ENCODE measurements at regions of chr6 and their contacts with region 1.

Region 1: DNA sequence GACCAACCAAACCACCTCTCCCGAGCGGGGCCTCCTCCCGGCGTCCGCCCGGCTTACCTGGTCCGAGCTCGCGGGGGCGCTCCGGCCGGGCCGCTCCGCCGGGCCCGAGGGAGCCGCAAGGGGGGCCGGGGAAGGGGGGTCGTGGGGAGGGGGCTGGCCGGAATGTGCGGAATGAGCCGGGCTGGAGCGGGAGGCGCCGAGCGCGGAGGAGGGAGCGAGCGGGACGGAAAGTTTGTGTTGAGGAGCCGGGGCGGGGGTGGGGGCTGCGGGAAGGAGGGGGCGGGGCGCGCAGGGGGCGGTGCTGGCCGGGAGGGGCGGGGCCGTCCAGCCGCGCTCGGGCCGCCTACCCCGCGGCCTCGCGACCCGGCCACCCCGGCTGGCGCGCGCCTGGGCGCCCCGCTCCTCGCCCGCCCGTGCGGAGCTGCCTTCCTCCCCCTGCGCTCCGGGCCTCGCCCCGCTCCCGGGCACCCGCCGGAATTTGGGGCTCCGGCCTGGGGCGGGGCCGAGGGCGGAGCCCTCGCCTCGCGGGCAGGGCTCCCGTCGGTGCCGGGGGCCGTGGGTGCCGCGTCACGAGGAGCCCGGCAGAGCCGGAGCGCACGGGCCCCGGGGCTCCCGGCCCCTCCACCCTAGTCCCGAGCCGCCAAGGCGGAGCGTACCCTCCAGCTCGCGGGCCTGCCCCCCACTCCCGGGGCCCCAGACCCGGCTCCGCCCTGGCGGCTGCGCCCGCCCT is at the start of gene TEAD3:
- DNase-seq: peak; percentile 59 to 70
- ATAC-seq: peak; percentile 11 to 72 (median 44)
- H3K4me3 ChIP-seq: peak within 1 kb of the TSS; percentile 70 to 95 (median 83)
- H3K27ac ChIP-seq: peak within 1 kb of the TSS; percentile 72 to 98 (median 95)
- H3K4me1 ChIP-seq: peaks cover 17 to 71% (median 48%) of the 10 kb centered on the region in 9 donors
- H3K27me3 ChIP-seq: peaks cover 0 to 88% (median 5%) of the 10 kb centered on the region in 7 donors
- CTCF ChIP-seq: peak in 2 of 9 donors; percentile 20 to 22
- total RNA-seq, gene TEAD3: 27.9 to 54.4 (median 35.5) TPM

Region 2: DNA sequence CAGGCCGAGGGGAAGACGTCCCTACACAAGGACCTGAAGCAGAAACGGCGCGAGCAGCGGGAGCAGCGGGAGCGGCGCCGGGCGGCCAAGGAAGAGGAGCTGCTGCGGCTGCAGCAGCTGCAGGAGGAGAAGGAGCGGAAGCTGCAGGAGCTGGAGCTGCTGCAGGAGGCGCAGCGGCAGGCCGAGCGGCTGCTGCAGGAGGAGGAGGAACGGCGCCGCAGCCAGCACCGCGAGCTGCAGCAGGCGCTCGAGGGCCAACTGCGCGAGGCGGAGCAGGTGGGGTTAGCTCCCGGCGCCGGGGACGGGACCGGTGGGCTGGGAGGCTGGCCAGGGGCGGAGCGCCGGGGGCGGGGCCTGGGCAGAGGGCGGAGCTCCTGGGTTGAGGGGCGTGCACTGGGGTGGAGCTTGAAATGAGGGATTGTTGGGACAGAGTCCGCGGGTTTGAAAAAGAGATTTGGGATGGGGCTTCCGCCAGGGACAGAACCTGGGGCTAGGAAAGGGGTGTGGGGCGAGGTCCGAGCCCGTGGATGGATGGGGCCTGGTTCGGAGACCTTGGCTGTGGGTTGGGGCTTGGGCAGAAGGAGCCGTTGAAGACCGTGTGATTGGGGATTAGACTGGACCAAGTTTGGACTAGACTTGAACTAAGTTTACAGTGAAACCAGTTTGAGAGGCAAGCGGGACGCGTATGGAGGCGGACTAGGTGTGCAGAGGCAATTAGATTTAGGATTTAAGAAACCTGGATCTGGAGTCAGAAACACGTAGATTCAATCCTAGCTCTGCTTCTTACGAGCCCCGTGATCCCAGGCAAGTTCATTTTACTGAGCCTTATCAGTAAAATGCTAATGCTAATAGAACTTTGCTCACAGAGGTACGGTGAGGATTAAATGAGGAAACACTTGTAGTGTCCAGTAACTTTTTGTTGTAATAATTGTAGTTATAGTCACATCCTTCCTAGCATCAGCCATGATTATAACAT is 178.5 kb before region 1 on chr6:
- intact Hi-C with region 1: no loop called
- DNase-seq: peak; percentile 80 to 88
- ATAC-seq: peak; percentile 98 to 99 (median 99)
- H3K4me3 ChIP-seq: peak overlapping the region; percentile 40 to 82 (median 56)
- H3K27ac ChIP-seq: peak overlapping the region in 4 of 10 donors; percentile 30 to 58 (median 48)
- H3K4me1 ChIP-seq: peaks cover 0 to 16% (median 10%) of the 10 kb centered on the region in 9 donors
- H3K27me3 ChIP-seq: no peaks in the 10 kb centered on the region
- CTCF ChIP-seq: peak in 3 of 9 donors; percentile 20 to 35 (median 21)

Region 3: GRCh38 chr6:35468181-35468979 is 28.6 kb before region 1 on chr6 and contains the start of gene RPL10A:
- intact Hi-C with region 1: loop called in 1 of 10 experiments (anchors 2 kb)
- DNase-seq: peak; percentile 92 to 97
- ATAC-seq: peak; percentile 87 to 95 (median 93)
- H3K4me3 ChIP-seq: peak within 1 kb of the TSS; percentile 68 to 87 (median 82)
- H3K27ac ChIP-seq: peak within 1 kb of the TSS; percentile 44 to 93 (median 89)
- H3K4me1 ChIP-seq: peaks cover 4 to 46% (median 40%) of the 10 kb centered on the region in 9 donors
- H3K27me3 ChIP-seq: no peaks in the 10 kb centered on the region
- CTCF ChIP-seq: peak; percentile 94 to 99 (median 97)
- total RNA-seq, gene RPL10A: 476 to 650 (median 529) TPM

Region 4: GRCh38 chr6:35511562-35511941 is 14.5 kb after region 1 on chr6:
- intact Hi-C with region 1: no loop called
- DNase-seq: no peak
- ATAC-seq: peak in 2 of 8 donors; percentile 22 to 28
- H3K4me3 ChIP-seq: peak overlapping the region in 4 of 10 donors; percentile 22 to 32 (median 28)
- H3K27ac ChIP-seq: no peak overlapping the region
- H3K4me1 ChIP-seq: peaks cover 0 to 10% (median 4%) of the 10 kb centered on the region in 9 donors
- H3K27me3 ChIP-seq: peaks cover 0 to 63% (median 46%) of the 10 kb centered on the region in 7 donors
- CTCF ChIP-seq: no peak

Region 5: GRCh38 chr6:35562053-35562452 is 65.0 kb after region 1 on chr6:
- intact Hi-C with region 1: no loop called
- DNase-seq: peak in 1 of 2 donors; percentile 15
- ATAC-seq: peak in 2 of 8 donors; percentile 31 to 89
- H3K4me3 ChIP-seq: no peak overlapping the region
- H3K27ac ChIP-seq: no peak overlapping the region
- H3K4me1 ChIP-seq: peaks cover 0 to 5% (median 0%) of the 10 kb centered on the region in 9 donors
- H3K27me3 ChIP-seq: peaks cover 0 to 21% (median 14%) of the 10 kb centered on the region in 7 donors
- CTCF ChIP-seq: no peak

Measured in heart right ventricle (tissue), 16 donors.